Psoas muscle (tissue), 8 donors: ENCODE measurements at regions of chr12 and their contacts with region 1.

Region 1: GRCh38 chr12:26195641-26196420 is 458 bp downstream of the SSPN start:
- DNase-seq: peak; percentile 59 to 78
- ATAC-seq: peak; percentile 82 to 88 (median 85)
- H3K4me3 ChIP-seq: peak overlapping the region; percentile 82
- H3K27ac ChIP-seq: peak overlapping the region; percentile 89
- H3K4me1 ChIP-seq: peaks cover 28% of the 10 kb centered on the region
- H3K27me3 ChIP-seq: no peaks in the 10 kb centered on the region
- CTCF ChIP-seq: no peak

Region 2: DNA sequence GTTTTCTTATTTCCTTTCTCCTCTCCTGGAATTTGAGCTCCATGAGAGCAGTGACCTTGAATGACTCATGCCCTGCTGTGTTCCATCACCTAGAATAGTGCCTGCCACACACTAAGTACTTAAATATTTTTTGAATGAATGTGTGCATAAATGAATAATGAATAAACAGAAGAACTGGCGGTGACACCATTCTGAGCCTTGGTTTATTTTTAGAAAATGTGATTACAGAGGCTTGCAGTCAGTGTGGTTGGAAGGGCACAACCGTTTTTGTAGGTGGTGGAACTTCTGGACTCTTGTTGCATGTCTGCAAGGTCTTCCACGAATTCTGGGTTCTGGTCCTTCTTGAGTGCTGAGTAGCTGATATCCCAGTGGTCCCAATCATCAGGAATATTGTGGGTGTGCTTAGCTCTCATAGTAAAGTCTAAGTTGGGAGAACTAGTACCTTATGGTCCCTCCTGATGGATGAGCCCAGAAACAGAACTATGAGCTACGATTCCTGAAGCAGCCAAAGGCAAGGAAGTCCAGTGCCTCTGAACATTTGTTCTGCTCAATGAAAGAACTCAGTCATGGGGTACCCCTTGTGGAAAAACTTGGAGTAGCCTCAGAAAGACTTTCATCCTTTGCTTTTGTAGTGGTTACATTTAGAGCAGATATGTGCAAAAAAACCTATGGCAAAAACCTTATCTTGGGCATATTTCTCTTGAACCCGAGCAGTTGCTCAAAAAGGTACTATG is 42.2 kb before region 1 on chr12:
- intact Hi-C with region 1: loop called in 1 of 2 experiments (anchors 5 kb)
- DNase-seq: no peak
- ATAC-seq: peak; percentile 94 to 96 (median 96)
- H3K4me3 ChIP-seq: no peak overlapping the region
- H3K27ac ChIP-seq: peak overlapping the region; percentile 67
- H3K4me1 ChIP-seq: peaks cover 14% of the 10 kb centered on the region
- H3K27me3 ChIP-seq: no peaks in the 10 kb centered on the region
- CTCF ChIP-seq: no peak

Region 3: GRCh38 chr12:26513363-26514043 is 317.7 kb after region 1 on chr12:
- intact Hi-C with region 1: no loop called
- DNase-seq: no peak
- ATAC-seq: no peak
- H3K4me3 ChIP-seq: no peak overlapping the region
- H3K27ac ChIP-seq: no peak overlapping the region
- H3K4me1 ChIP-seq: no peaks in the 10 kb centered on the region
- H3K27me3 ChIP-seq: no peaks in the 10 kb centered on the region
- CTCF ChIP-seq: no peak